ENCODE measurements at regions of chr2 and their contacts with region 1.

Region 1: GRCh38 chr2:127464470-127465257 is 46.4 kb downstream of the PROC start:
- DNase-seq: no peak
- H3K4me3 Mint-ChIP-seq: peak overlapping the region; percentile 26
- H3K27ac Mint-ChIP-seq: peak overlapping the region; percentile 86
- H3K4me1 Mint-ChIP-seq: peaks cover 53% of the 10 kb centered on the region
- H3K27me3 Mint-ChIP-seq: no peaks in the 10 kb centered on the region

Region 2: DNA sequence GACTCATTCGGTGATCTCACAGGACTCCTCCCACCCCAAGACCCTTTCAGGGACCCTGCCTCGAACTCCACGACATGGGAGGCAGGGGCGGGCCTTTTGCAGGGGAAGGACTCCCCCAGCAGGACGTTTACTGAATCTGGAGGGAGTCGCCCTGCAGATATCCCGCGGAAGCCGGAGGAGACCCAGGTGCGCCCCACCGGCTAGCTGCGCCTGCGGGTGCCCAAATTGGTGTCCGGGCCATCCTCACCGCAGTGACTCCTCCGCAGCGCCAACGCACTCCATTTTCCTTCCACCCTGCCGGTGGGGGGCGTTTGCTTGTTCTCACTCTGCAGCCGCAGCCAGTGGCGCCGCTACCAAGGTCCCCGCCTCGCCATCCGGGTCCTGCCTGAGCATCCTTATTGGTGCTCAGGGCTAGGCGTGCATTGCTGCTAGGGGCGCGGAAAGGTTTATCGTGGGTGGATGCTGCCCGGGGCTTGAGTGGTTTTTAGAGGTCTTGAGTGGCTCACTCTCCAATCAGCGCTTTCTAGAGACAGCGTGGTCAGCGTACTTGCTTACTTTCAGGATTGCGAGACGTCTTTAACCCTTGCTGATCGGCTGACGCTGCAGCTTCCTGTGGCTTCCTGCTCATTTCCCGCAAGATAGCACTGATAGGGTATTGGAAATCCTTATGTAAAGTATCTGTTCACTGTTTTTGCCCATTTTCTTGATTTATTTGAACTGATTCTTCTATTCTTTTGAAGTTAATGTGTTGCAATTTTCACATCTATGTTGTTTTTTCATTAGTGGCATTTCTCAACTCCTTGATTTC is 439.1 kb before region 1 on chr2:
- intact Hi-C with region 1: no loop called
- DNase-seq: peak; percentile 69
- H3K4me3 Mint-ChIP-seq: peak overlapping the region; percentile 71
- H3K27ac Mint-ChIP-seq: no peak overlapping the region
- H3K4me1 Mint-ChIP-seq: peaks cover 12% of the 10 kb centered on the region
- H3K27me3 Mint-ChIP-seq: peaks cover 51% of the 10 kb centered on the region

Region 3: DNA sequence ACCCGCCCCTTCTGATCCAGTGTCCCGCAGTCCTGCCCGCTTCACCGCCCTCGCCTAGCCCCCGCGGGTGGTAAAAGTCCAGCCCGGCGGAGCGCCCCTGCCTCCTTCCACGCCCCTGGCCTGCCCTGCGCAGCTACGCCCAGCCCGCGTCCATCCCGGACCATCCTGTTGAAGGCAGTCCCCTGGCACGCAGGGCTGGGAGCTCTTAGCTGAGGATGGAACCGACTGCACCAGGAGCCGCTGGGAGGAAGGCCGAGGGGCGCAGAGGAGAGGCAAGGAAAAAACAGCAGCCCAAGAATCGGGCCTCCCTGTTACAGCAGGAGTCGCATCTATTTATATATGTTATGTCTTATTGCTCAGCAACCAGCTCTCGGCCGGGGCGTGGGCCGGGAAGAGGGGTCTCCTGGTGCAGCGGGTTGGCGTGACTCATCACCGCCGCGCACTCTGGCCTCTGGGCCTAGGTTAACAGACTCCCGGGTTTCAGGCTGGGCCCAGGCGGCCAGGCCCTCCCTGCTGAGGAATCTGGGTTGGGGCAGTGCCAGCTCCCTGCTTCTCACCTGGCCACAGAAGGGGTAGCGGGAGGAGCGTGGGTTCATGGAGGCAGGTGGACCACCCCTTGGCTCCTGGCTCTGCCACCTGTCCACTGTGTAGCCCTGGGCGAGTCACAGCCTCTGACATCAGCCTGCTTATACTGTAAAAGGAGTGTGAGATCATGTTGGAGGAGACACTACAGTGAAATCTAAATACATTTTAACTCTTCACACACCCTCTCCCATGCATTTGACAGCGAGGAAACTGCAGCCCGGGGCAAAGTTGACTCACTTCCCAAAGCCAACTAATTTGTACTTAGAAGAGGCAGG is 63.5 kb before region 1 on chr2:
- intact Hi-C with region 1: loop called (anchors 2 kb)
- DNase-seq: no peak
- H3K4me3 Mint-ChIP-seq: no peak overlapping the region
- H3K27ac Mint-ChIP-seq: peak overlapping the region; percentile 46
- H3K4me1 Mint-ChIP-seq: peaks cover 45% of the 10 kb centered on the region
- H3K27me3 Mint-ChIP-seq: peaks cover 4% of the 10 kb centered on the region

Region 4: DNA sequence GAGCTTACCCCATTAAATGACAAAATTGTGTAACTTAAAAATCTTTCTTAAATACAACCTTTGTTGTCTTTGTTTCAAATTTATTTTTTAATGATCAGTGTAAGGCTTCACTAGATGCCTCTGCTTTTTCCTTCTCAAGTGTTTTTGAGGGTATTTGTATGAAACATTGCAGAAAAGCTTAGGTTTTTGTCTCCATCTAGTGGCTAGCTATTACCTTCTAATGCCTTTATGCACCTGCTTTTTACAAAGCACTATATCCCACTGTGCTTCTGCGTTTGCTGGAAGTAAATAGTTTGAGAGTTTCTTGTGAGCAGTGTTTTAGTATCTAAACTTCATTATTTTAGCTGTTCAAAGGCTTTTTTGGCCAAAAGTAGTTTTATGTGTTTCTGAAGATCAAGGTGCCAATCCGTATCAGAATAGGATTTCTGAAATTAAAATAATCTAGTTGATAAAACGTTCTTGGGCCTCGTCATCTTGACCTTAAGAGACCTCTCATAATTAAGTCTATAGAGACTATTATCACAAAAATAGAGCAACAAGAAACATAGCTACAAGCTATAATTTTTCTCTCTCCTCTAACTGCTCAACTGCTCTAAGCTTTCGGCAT is 14.7 kb after region 1 on chr2:
- intact Hi-C with region 1: no loop called
- DNase-seq: no peak
- H3K4me3 Mint-ChIP-seq: no peak overlapping the region
- H3K27ac Mint-ChIP-seq: no peak overlapping the region
- H3K4me1 Mint-ChIP-seq: no peaks in the 10 kb centered on the region
- H3K27me3 Mint-ChIP-seq: no peaks in the 10 kb centered on the region

Measured in activated T-helper 2 cell treated with anti-CD3 and anti-CD28 coated beads, Interferon-gamma antibody, Interleukin-2, Interleukin-4, amounts not matched to agents 10 μg/mL and 5 μg/mL and 100 μg/mL, durations not matched to agents 14 hours and 24 hours and 36 hours (primary cell).